Activated CD4-positive, alpha-beta T cell treated with anti-CD3 and anti-CD28 coated beads, Interleukin-2, amount 10 ng/mL, durations not matched to agents 24 days and 14 days (primary cell): ENCODE measurements at regions of chr13 and their contacts with region 1.

Region 1: DNA sequence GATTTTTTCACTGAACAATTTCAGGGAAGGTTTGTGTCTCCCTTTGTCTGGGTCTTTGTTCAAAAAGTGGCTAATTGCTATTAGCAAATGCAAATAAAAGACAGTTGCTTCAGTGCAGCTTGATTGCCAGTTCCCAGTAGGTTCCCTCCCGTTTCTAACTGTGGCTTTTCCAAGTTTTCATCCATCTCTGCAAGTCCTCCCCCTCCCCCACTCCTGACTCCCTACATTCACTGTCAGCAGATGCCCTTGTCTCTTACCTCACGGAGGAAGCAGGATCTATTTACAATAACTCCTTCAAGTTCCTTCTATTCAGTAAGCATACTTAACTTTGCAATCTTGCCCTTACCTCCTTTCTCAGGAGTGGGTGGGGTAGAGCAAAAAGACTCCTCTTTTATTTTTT is 55.4 kb upstream of the SCEL start:
- DNase-seq: no peak
- H3K4me3 Mint-ChIP-seq: no peak overlapping the region
- H3K27ac Mint-ChIP-seq: no peak overlapping the region
- H3K4me1 Mint-ChIP-seq: peaks cover 15% of the 10 kb centered on the region
- H3K27me3 Mint-ChIP-seq: peaks cover 5% of the 10 kb centered on the region

Region 2: GRCh38 chr13:77026818-77027585 is 453.1 kb before region 1 on chr13 and contains the start of gene FBXL3:
- intact Hi-C with region 1: loop called (anchors 5 kb)
- DNase-seq: peak; percentile 94
- H3K4me3 Mint-ChIP-seq: peak within 1 kb of the TSS; percentile 99
- H3K27ac Mint-ChIP-seq: peak within 1 kb of the TSS; percentile 95
- H3K4me1 Mint-ChIP-seq: peaks cover 48% of the 10 kb centered on the region
- H3K27me3 Mint-ChIP-seq: no peaks in the 10 kb centered on the region
- total RNA-seq, gene FBXL3: 36.0 and 41.6 TPM in 2 replicates

Region 3: DNA sequence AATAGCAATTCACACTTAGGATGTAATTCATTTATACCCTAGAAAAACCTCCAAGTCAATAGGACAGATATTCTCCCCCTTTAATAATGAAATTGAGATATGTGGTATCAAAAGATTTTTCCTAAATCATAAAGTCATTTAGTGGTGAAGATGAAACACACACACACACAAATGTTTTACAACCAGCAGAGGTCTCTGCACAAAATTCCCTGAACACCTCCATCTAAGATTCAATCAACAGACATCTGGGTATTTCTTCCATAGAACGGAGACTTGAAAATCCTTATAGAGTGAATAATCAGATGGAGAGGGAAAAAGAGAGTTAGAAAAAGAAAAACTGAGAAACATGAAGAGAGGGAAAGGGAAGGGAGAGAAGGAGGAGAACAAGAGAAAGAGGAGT is 205.9 kb before region 1 on chr13:
- intact Hi-C with region 1: loop called (anchors 5 kb)
- DNase-seq: no peak
- H3K4me3 Mint-ChIP-seq: no peak overlapping the region
- H3K27ac Mint-ChIP-seq: no peak overlapping the region
- H3K4me1 Mint-ChIP-seq: peaks cover 11% of the 10 kb centered on the region
- H3K27me3 Mint-ChIP-seq: no peaks in the 10 kb centered on the region

Region 4: DNA sequence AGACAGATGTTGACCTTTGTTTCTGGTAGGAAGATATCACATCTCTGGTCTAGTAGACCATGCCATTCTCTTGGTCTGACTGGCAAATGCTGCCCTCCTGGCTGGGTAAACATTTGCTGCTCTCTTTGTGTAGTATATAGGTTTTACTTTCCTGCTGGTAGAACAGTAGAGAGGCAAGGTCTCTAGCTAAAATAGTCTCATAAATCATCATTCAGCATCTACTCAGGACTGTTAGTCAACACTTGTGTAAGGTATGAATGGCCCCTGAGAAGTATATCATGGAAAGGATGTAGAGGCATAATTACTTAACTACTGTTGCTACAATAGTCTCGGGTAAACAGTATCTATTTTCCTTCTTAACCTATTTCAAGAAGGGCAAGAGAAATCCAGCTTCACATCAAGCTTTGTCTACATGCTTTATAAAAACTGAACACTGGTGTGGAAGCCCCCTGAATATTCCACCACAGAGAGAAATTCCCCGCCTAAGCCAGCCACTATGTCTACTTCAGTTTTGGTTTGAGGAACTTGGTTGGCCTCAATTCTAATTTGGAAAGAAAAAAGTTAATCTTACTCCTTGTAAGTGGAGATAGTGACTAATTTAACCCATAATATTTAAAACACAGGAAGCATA is 134.8 kb before region 1 on chr13:
- intact Hi-C with region 1: loop called (anchors 1 kb)
- DNase-seq: peak; percentile 57
- H3K4me3 Mint-ChIP-seq: peak overlapping the region; percentile 36
- H3K27ac Mint-ChIP-seq: peak overlapping the region; percentile 89
- H3K4me1 Mint-ChIP-seq: peaks cover 8% of the 10 kb centered on the region
- H3K27me3 Mint-ChIP-seq: no peaks in the 10 kb centered on the region

Region 5: GRCh38 chr13:77429320-77430142 is 50.5 kb before region 1 on chr13:
- intact Hi-C with region 1: loop called (anchors 5 kb)
- DNase-seq: no peak
- H3K4me3 Mint-ChIP-seq: no peak overlapping the region
- H3K27ac Mint-ChIP-seq: peak overlapping the region; percentile 38
- H3K4me1 Mint-ChIP-seq: peaks cover 1% of the 10 kb centered on the region
- H3K27me3 Mint-ChIP-seq: peaks cover 2% of the 10 kb centered on the region

Region 6: GRCh38 chr13:77448679-77449078 is 31.4 kb before region 1 on chr13:
- intact Hi-C with region 1: no loop called
- DNase-seq: no peak
- H3K4me3 Mint-ChIP-seq: no peak overlapping the region
- H3K27ac Mint-ChIP-seq: no peak overlapping the region
- H3K4me1 Mint-ChIP-seq: no peaks in the 10 kb centered on the region
- H3K27me3 Mint-ChIP-seq: peaks cover 6% of the 10 kb centered on the region

Region 7: DNA sequence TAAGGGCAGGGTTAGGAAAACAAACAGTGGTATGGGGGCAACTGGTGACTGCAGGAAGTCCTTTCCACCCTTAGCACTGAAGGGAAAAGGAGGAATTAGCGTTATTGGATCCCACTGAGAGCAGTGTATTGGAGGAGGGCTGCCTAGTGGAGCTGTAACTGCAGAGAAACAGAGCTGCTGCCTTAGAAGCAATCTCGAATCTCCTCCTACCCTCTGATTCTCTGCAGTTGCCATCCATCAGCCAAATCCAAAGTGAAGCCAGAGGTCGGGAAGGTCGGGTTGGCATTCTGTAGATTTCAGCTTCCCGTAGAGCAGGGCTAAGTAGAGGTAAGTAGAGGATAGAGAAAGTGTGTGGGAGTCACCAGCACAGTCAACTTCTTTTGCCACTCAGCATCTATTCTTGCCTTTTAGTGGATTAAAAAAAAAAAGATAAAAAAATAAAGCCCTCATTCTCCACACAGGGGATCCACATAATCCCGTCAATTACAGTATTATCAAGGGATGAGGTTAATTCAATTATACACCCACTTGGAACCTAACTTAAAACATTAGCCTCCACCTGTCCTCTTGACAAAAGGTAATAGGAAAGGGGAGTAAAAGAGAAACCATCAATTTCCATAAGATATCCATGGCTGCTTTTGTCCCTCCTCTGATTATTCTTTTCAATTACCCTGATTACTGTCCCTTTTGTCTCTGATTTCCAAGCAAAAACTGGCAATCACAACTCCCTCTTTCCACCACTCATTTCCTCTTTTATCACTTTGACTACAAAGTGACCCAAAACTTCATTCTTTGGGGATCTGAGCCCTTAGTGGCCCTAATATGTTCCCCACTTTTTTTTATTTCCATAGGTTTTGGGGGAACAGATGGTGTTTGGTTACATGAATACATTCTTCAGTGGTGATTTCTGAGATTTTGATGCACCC is 1691.3 kb after region 1 on chr13:
- intact Hi-C with region 1: no loop called
- DNase-seq: no peak
- H3K4me3 Mint-ChIP-seq: no peak overlapping the region
- H3K27ac Mint-ChIP-seq: no peak overlapping the region
- H3K4me1 Mint-ChIP-seq: no peaks in the 10 kb centered on the region
- H3K27me3 Mint-ChIP-seq: peaks cover 35% of the 10 kb centered on the region